ENCODE measurements at regions of chr19 and their contacts with region 1.

Region 1: DNA sequence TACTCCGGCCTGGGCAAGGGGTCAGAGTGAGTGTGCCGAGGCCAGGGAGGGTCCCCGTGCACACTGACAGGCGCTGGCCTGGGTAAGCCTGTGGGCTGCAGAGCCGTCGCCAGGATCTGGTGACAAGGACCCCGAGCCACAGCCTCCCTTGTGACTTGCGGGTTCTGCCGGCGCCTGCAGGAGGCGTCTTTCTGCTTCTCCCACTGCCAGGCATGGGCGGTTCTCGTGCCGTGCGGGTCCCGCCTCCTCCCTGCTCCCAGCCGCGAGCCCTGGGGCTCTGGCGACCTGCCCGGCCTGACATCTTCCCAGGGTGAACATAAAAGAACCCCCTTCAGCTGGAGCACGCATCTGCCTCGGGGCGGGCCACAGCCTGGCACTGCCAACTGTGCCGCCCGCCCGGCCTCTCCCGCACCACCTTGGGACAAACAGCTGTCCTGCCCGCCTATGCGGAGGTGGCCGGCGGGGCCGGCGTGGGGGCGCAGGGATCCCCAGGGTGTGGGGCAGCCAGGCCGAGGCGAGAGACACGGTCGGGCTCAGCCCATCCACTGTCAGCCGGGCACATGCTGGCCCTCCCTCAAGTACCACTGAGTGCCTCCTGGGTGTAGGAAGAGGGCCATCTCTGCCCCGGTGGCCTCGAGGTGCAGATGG is 1.5 kb upstream of the HCN2 start:
- DNase-seq: peak; percentile 72
- ATAC-seq: peak; percentile 61
- H3K4me3 ChIP-seq: no peak overlapping the region
- H3K27ac ChIP-seq: no peak overlapping the region
- H3K4me1 ChIP-seq: peaks cover 5% of the 10 kb centered on the region
- H3K27me3 ChIP-seq: peaks cover 16% of the 10 kb centered on the region
- CTCF ChIP-seq: peak; percentile 61
- POLR2A ChIP-seq: no peak
- RAD21 ChIP-seq: peak; percentile 47

Region 2: DNA sequence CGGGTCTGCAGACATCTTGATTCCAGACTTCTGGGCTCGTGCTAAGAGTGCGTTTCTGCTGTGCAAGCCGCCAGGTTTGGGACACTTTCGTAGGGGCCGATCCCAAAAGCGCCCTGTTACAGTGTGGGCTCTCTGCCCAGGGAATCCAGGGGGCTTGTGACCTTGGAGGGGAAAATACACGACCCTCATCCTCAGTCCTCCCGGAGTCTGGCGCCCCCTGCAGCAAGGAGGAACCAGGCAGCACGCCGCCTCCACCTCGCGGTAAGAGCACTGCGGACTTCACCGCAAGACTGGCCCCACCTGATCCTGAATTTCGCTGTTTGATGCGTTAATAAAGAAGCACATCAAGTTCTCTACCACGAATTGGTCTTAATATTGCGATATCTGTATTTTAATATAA is 39.9 kb after region 1 on chr19:
- CTCF ChIA-PET with region 1: no interaction called
- POLR2A ChIA-PET with region 1: interaction called, 10 read pairs
- dilution Hi-C with region 1: no loop called
- in situ Hi-C with region 1: no loop called
- intact Hi-C with region 1: loop called (anchors 2 kb)
- DNase-seq: no peak
- ATAC-seq: no peak
- H3K4me3 ChIP-seq: no peak overlapping the region
- H3K27ac ChIP-seq: no peak overlapping the region
- H3K4me1 ChIP-seq: peaks cover 5% of the 10 kb centered on the region
- H3K27me3 ChIP-seq: no peaks in the 10 kb centered on the region
- CTCF ChIP-seq: peak; percentile 31; the same call in 1 of the 2 replicates
- POLR2A ChIP-seq: no peak
- RAD21 ChIP-seq: no peak; the same call in 1 of the 2 replicates

Region 3: GRCh38 chr19:633068-633785 is 45.0 kb after region 1 on chr19 and contains the start of gene POLRMT:
- CTCF ChIA-PET with region 1: no interaction called
- POLR2A ChIA-PET with region 1: no interaction called
- dilution Hi-C with region 1: no loop called
- in situ Hi-C with region 1: no loop called
- intact Hi-C with region 1: loop called (anchors 2 kb)
- DNase-seq: peak; percentile 98
- ATAC-seq: peak; percentile 96
- H3K4me3 ChIP-seq: peak within 1 kb of the TSS; percentile 66
- H3K27ac ChIP-seq: peak within 1 kb of the TSS; percentile 82
- H3K4me1 ChIP-seq: peaks cover 9% of the 10 kb centered on the region
- H3K27me3 ChIP-seq: no peaks in the 10 kb centered on the region
- CTCF ChIP-seq: 0 out of 2 replicates have a peak, but pooled peaks have one; percentile 19
- POLR2A ChIP-seq: peak; percentile 57
- RAD21 ChIP-seq: no peak
- total RNA-seq, gene POLRMT: 9.9 and 10.3 TPM in 2 replicates

Region 4: GRCh38 chr19:732148-733069 is 144.2 kb after region 1 on chr19:
- CTCF ChIA-PET with region 1: no interaction called
- POLR2A ChIA-PET with region 1: no interaction called
- dilution Hi-C with region 1: no loop called
- in situ Hi-C with region 1: loop called (anchors 5 kb)
- intact Hi-C with region 1: loop called (anchors 1 kb)
- DNase-seq: no peak
- ATAC-seq: no peak
- H3K4me3 ChIP-seq: no peak overlapping the region
- H3K27ac ChIP-seq: no peak overlapping the region
- H3K4me1 ChIP-seq: no peaks in the 10 kb centered on the region
- H3K27me3 ChIP-seq: no peaks in the 10 kb centered on the region
- CTCF ChIP-seq: no peak
- POLR2A ChIP-seq: no peak
- RAD21 ChIP-seq: no peak